Right ventricle myocardium inferior (tissue), 1 donor: ENCODE measurements at regions of chr1 and their contacts with region 1.

Region 1: DNA sequence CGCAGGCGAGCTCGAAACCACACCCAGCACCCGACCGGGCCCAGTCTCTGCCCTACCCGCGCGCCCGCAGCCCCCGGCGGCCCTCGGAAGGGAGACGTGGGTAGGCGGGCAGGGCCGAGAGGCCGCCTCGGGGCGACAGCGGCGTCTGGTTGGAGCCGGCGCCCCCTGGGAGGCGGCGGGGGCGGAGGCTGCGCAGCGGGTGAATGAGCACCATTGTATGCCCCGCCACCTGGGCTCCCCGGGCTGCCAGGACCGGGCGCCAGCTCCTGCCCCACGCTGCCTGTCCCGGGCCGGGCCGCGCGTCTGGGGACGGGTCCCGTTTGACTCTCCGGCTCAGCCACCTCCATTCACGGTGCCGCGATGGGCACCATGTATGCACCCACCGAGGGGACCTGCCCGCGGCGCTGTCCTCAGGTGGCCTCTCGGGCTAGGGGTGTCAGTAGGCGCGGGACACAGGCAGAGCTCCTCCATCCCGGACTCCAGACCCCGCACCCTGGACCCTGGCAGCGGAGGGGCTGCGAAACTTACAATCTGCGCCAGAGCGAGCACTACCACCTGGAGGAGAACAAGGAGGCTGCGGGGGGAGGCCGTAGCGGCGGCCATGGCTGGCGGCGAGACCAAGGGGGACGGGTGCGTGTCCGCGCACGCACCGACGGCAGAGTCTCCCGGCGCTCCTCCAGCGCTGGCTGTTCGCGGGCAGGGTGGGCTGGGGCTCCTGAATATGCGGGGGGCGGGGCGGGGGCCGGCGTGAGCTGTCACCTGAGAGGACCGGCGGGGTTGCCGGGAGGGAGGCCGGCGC is at the start of gene COL9A2:
- DNase-seq: peak; percentile 76
- ATAC-seq: peak; percentile 24
- total RNA-seq, gene COL9A2: 0.24 TPM

Region 2: DNA sequence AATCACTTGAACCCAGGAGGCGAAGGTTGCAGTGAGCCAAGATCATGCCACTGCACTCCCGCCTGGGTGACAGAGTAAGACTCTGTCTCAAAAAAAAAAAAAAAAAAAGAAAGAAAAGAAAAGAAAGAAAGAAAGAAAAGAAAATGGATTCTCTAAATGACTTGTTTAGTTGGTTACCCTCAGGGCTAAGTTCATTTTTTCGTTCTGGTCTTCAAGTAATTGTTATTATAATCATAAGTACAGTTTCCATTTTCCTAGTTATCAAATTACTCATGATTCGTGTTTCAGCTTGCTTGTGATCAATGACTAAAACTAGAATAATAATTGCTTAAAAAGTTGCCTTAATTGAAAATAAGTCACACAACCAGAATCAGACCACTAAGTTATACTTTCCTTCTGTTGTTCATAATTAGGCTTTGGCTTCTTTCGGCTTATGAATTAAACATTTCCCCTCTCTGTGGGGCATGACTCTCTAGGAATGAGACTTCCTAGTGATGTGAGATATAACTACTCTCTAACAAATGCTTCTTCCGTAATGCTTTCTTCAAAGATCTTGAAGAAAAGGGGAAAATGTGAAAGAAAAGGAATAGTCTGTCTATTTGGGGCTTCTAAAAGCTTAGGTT is 165.2 kb before region 1 on chr1:
- intact Hi-C with region 1: loop called (anchors 2 kb)
- DNase-seq: no peak
- ATAC-seq: no peak

Region 3: DNA sequence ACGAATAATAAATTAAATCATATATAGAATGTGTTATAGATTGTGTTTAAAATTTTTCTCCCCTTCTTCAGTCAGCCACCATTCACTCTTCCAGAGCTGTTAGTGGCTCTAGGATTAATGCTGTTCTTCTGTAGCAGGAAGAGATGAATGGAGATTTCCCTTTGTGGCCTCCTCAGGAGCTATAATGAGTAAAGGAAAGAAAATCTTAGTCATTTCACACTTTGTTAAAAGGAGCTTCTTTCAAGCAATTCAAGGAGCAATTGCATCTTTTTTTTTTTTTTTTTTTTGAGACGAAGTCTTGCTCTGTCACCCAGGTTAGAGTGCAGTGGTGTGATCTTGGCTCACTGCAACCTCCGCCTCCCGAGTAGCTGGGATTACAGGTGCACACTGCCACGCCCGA is 92.8 kb before region 1 on chr1:
- intact Hi-C with region 1: no loop called
- DNase-seq: no peak
- ATAC-seq: no peak